Activated CD8-positive, alpha-beta memory T cell treated with anti-CD3 and anti-CD28 coated beads, Interleukin-2, amount 10 ng/mL, durations not matched to agents 7 days and 5 days (primary cell): ENCODE measurements at regions of chr18 and their contacts with region 1.

Region 1: GRCh38 chr18:63131106-63131958 is 188.2 kb downstream of the BCL2 start:
- DNase-seq: peak; percentile 70
- ATAC-seq: peak; percentile 61
- H3K4me3 Mint-ChIP-seq: no peak overlapping the region
- H3K27ac Mint-ChIP-seq: peak overlapping the region; percentile 76
- H3K4me1 Mint-ChIP-seq: peaks cover 32% of the 10 kb centered on the region
- H3K27me3 Mint-ChIP-seq: no peaks in the 10 kb centered on the region

Region 2: DNA sequence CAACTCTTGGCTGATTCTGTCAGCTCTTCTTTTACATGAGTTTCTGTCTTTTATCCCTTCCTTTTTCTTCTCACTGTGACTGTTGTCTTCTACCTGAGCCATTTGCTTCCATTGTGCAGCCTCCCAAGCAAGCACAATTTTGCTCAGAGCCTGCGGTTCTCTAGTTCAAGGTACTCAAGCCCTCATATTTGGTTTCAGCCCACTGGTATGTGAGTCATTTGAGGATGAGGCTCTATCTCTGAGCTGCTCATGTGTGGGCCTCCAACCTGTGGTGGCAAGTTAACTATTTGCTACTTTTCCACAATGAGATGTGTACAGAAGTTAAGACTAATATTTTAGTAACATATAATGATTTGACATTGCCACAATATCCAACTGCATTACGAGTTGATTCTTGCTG is 233.0 kb before region 1 on chr18:
- CTCF ChIA-PET with region 1: no interaction called
- DNase-seq: peak; percentile 65
- ATAC-seq: peak; percentile 82
- H3K4me3 Mint-ChIP-seq: no peak overlapping the region
- H3K27ac Mint-ChIP-seq: peak overlapping the region; percentile 18
- H3K4me1 Mint-ChIP-seq: peaks cover 22% of the 10 kb centered on the region
- H3K27me3 Mint-ChIP-seq: no peaks in the 10 kb centered on the region

Region 3: GRCh38 chr18:63155169-63155852 is 24.0 kb after region 1 on chr18:
- CTCF ChIA-PET with region 1: interaction called, 15 read pairs
- DNase-seq: peak; percentile 88
- ATAC-seq: peak; percentile 81
- H3K4me3 Mint-ChIP-seq: peak overlapping the region; percentile 76
- H3K27ac Mint-ChIP-seq: peak overlapping the region; percentile 90
- H3K4me1 Mint-ChIP-seq: peaks cover 96% of the 10 kb centered on the region
- H3K27me3 Mint-ChIP-seq: no peaks in the 10 kb centered on the region

Region 4: DNA sequence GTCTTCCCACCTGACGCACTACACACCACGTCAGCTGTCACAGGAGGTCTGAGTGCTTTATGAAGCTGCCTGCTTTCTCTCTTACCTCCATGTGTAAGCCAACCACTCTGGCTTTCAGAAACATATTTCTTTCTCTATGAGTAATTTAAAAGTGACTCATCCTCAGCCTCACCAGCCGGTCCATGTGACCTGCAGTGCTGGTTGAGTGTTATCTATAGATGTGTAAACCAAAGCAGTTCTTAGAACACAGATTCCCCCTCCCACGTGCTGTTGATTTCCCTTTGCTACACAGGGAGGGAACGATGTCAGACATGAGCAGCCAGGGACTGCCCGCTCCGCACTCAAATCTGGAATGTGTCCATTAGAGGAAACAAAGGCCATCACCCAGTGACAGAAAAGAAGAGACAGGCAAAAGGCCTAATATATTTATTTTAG is 30.4 kb after region 1 on chr18:
- CTCF ChIA-PET with region 1: interaction called, 10 read pairs
- DNase-seq: peak; percentile 93
- ATAC-seq: peak; percentile 88
- H3K4me3 Mint-ChIP-seq: peak overlapping the region; percentile 76
- H3K27ac Mint-ChIP-seq: peak overlapping the region; percentile 90
- H3K4me1 Mint-ChIP-seq: peaks cover 94% of the 10 kb centered on the region
- H3K27me3 Mint-ChIP-seq: no peaks in the 10 kb centered on the region

Region 5: DNA sequence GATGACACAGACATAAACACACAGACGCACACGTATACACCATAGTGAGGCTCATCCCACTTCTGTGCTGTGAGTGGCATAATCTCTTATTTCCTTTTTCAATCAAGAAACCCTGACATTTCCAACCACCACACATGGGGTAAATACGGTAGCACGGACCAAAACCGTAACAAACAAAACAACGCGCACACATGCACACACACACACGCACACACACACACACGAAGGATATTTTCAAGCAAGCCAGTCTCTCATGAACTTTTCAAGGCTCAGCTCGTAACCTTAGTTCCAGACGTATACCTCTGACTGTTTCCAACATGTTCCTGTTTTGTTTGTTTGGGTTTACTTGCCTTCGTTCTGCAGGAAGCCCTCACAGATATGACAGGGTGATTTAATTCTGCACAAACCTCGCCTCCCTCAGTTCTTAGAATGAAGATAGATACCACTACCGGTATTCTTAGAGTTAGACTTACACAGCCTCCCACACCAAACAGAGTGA is 68.5 kb after region 1 on chr18:
- CTCF ChIA-PET with region 1: interaction called, 11 read pairs
- DNase-seq: peak; percentile 79
- ATAC-seq: peak; percentile 85
- H3K4me3 Mint-ChIP-seq: no peak overlapping the region
- H3K27ac Mint-ChIP-seq: no peak overlapping the region
- H3K4me1 Mint-ChIP-seq: peaks cover 41% of the 10 kb centered on the region
- H3K27me3 Mint-ChIP-seq: no peaks in the 10 kb centered on the region